CD8-positive, alpha-beta T cell (primary cell): ENCODE measurements at regions of chr5 and their contacts with region 1.

Region 1: DNA sequence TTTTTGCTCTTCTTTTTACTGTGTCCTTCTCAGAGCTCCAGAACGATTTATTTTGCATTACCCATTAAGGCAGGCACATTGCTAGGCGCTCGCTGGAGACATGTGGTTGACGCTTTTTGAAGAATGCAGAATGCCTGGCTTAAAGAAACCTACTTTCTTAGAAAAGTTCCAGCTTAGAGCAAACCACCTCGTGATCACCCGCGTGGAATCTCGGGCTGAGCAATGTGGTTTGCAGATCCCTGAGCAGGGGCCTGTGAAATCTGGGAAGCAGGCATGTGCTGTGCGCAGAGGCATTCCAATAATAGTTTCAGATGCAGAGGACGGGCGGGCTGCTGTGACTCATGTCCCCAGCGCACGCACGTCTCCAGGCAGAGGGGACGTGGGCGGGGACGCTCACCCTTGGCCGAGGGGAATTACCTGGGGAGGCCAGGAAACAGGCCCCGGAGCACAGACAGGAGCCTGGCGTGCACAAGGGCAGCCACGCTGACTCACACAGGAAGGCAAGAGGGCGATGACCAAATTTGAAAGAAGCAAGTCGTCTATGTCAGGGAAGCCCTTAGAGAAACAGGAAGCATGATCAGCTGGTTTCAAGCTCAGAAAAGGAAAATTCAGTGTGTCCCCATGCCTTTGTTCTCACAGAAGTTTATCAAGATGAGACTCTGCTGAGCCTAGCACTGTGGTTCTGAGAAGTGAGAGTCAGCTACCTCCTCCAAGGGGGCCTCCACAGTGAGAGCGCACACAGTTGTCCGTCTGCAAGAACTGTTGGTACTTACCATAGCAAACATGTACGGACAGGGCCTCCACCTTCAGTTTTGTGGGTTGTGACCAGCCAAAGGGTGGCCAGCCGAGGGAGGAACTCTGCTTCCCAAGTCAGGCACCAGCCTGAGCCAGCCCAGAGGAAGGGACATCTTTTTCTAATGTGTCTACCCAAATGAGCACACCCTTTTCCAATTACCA is 218.6 kb downstream of the PIK3R1 start:
- DNase-seq: peak; percentile 54 to 95 (median 87)
- ATAC-seq: peak; percentile 96
- H3K4me3 ChIP-seq: peak overlapping the region; percentile 16
- H3K4me3 Mint-ChIP-seq: peak overlapping the region; percentile 73
- H3K27ac ChIP-seq: peak overlapping the region in 1 of 2 experiments; percentile 79
- H3K27ac Mint-ChIP-seq: peak overlapping the region; percentile 84
- H3K4me1 ChIP-seq: peaks cover 20% of the 10 kb centered on the region
- H3K4me1 Mint-ChIP-seq: peaks cover 36% of the 10 kb centered on the region
- H3K27me3 ChIP-seq: no peaks in the 10 kb centered on the region
- H3K27me3 Mint-ChIP-seq: no peaks in the 10 kb centered on the region
- CTCF ChIP-seq: no peak

Region 2: DNA sequence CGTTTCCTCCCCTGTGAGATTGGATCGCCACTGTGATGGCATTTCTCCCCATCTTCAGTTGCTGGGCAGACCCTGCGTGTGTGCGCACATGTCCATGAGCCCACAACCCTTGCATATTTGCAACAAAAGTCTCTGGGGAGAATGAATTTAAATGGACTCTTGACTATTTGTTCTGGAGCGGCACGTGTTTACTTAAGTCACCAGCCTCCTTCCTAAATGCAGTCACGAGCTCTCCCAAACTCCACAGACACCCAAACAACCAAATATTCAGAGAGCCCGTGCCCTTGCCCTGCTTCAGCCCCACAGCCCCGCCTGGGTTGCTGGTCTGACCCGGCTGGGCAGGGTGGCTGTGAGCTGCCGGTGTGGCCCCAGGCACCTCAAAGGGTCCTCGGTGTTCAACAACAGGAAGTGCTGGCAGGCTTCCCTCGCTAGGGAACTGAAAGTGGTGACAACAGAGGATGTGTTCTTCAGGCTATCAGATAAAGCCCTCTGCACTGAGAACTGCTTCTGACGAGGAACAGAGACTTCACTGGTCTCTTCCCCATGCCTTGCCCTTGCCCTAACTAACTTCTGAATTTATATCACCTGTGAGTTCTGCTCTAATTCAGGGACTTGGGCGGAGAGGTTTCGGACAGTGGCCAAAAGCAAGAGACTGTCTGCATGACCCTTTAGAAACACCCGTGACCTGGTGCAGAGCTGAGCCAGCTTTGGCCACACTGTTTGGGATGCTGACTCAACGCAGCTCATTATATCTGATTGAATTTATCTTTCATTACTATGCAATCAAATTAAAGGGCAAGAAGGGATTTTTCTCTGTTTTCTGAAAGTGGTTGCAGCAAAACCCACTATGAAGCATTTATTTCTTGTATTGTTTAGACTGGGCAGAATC is 1218.4 kb before region 1 on chr5:
- CTCF ChIA-PET with region 1: no interaction called
- POLR2A ChIA-PET with region 1: no interaction called
- intact Hi-C with region 1: loop called in 1 of 2 experiments (anchors 5 kb)
- DNase-seq: peak; percentile 51 to 88 (median 74)
- ATAC-seq: peak; percentile 97
- H3K4me3 ChIP-seq: peak overlapping the region; percentile 19 to 39
- H3K4me3 Mint-ChIP-seq: peak overlapping the region; percentile 72
- H3K27ac ChIP-seq: peak overlapping the region; percentile 60 to 61
- H3K27ac Mint-ChIP-seq: peak overlapping the region; percentile 99
- H3K4me1 ChIP-seq: peaks cover 45% of the 10 kb centered on the region
- H3K4me1 Mint-ChIP-seq: peaks cover 60% of the 10 kb centered on the region
- H3K27me3 ChIP-seq: no peaks in the 10 kb centered on the region
- H3K27me3 Mint-ChIP-seq: no peaks in the 10 kb centered on the region
- CTCF ChIP-seq: no peak

Region 3: DNA sequence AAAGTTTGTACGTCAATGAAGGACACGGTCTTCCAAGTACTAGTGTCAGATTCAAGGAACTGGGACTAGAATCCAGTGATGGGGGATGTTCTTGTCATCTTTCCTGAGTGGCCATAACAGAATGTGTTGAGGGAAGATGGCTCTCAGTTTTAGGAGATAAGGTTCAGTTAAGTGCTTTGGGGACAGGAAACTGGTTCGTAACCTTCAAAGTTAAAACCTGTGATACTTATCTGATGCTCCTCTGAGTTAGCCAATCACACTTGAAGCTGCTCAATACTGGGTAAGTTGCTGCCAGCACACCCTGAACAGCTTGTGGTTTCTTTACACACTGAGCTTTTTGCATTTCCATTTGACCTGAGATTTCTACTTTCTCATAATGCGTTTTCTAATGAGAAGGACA is 154.2 kb before region 1 on chr5:
- CTCF ChIA-PET with region 1: no interaction called
- POLR2A ChIA-PET with region 1: interaction called, 4 read pairs
- intact Hi-C with region 1: loop called in 1 of 2 experiments (anchors 1 kb)
- DNase-seq: peak in 6 of 9 experiments; percentile 30 to 91 (median 56)
- ATAC-seq: peak; percentile 89
- H3K4me3 ChIP-seq: peak overlapping the region; percentile 56
- H3K4me3 Mint-ChIP-seq: peak overlapping the region; percentile 86
- H3K27ac ChIP-seq: peak overlapping the region; percentile 68 to 74
- H3K27ac Mint-ChIP-seq: peak overlapping the region; percentile 95
- H3K4me1 ChIP-seq: peaks cover 59% of the 10 kb centered on the region
- H3K4me1 Mint-ChIP-seq: peaks cover 84% of the 10 kb centered on the region
- H3K27me3 ChIP-seq: no peaks in the 10 kb centered on the region
- H3K27me3 Mint-ChIP-seq: no peaks in the 10 kb centered on the region
- CTCF ChIP-seq: no peak

Region 4: GRCh38 chr5:68378204-68378824 is 55.9 kb before region 1 on chr5:
- CTCF ChIA-PET with region 1: no interaction called
- POLR2A ChIA-PET with region 1: interaction called, 3 read pairs
- intact Hi-C with region 1: loop called in 1 of 2 experiments (anchors 5 kb)
- DNase-seq: peak in 5 of 9 experiments; percentile 9 to 55 (median 23)
- ATAC-seq: peak; percentile 55
- H3K4me3 ChIP-seq: no peak overlapping the region
- H3K4me3 Mint-ChIP-seq: peak overlapping the region; percentile 9
- H3K27ac ChIP-seq: peak overlapping the region in 1 of 2 experiments; percentile 11
- H3K27ac Mint-ChIP-seq: peak overlapping the region; percentile 80
- H3K4me1 ChIP-seq: peaks cover 20% of the 10 kb centered on the region
- H3K4me1 Mint-ChIP-seq: peaks cover 56% of the 10 kb centered on the region
- H3K27me3 ChIP-seq: no peaks in the 10 kb centered on the region
- H3K27me3 Mint-ChIP-seq: no peaks in the 10 kb centered on the region
- CTCF ChIP-seq: no peak

Region 5: DNA sequence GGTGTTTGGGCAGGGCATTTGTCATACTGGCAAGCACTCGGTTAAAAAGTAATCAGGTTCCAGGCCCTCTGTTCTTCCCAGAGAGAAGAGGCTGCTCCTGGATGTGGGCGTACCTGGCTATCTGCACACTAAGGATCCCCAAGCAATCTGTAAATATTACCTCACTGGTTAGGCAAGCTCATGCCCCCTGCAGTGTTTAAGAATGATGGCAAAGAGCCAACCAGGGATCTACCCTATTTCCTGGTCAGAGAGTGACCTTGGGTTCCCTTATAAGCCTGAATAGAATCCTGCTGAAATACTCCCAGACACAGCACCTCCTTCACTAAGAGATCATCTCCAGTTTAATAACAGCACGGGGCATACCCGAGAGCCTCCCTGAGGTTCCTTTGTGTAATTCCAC is 37.5 kb before region 1 on chr5:
- CTCF ChIA-PET with region 1: no interaction called
- POLR2A ChIA-PET with region 1: no interaction called
- intact Hi-C with region 1: no loop called
- DNase-seq: no peak
- ATAC-seq: no peak
- H3K4me3 ChIP-seq: no peak overlapping the region
- H3K4me3 Mint-ChIP-seq: no peak overlapping the region
- H3K27ac ChIP-seq: no peak overlapping the region
- H3K27ac Mint-ChIP-seq: no peak overlapping the region
- H3K4me1 ChIP-seq: no peaks in the 10 kb centered on the region
- H3K4me1 Mint-ChIP-seq: peaks cover 14% of the 10 kb centered on the region
- H3K27me3 ChIP-seq: no peaks in the 10 kb centered on the region
- H3K27me3 Mint-ChIP-seq: no peaks in the 10 kb centered on the region
- CTCF ChIP-seq: no peak

Region 6: DNA sequence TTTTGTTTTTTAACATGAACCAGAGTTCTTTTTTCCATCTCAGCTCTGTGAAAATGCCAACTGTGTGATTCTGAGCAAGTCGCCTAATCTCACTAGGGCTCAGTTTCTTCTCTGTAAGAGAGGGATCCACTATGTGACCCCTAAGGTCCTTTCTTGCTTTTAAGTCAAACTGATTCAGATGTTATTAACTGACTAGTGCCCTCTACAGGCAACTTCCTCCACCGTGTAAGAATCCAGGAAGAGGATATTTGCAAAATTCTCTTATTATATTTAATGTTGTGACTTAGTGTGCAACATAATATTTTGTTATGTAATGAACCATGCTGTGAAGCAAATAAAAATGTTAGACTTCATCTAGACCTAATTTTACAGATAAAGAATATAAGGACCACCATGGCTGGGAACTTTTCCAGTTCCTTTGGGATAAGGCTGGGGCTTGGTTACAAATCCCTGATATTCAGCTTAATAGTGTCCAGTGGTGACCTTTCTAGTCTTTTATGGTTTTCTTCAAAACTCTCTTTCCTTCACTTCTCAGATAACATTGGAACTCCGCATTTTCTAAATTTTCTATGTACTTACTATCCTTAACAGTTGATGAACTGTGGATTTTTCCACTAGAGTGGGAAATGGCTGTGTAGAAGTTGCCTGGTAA is 26.1 kb after region 1 on chr5:
- CTCF ChIA-PET with region 1: interaction called, 5 read pairs
- POLR2A ChIA-PET with region 1: no interaction called
- intact Hi-C with region 1: loop called in 1 of 2 experiments (anchors 1 kb)
- DNase-seq: peak in 8 of 9 experiments; percentile 13 to 81 (median 42)
- ATAC-seq: peak; percentile 55
- H3K4me3 ChIP-seq: no peak overlapping the region
- H3K4me3 Mint-ChIP-seq: no peak overlapping the region
- H3K27ac ChIP-seq: no peak overlapping the region
- H3K27ac Mint-ChIP-seq: peak overlapping the region; percentile 19
- H3K4me1 ChIP-seq: peaks cover 13% of the 10 kb centered on the region
- H3K4me1 Mint-ChIP-seq: peaks cover 18% of the 10 kb centered on the region
- H3K27me3 ChIP-seq: no peaks in the 10 kb centered on the region
- H3K27me3 Mint-ChIP-seq: no peaks in the 10 kb centered on the region
- CTCF ChIP-seq: peak; percentile 80

Region 7: GRCh38 chr5:68478301-68479095 is 44.3 kb after region 1 on chr5:
- CTCF ChIA-PET with region 1: no interaction called
- POLR2A ChIA-PET with region 1: no interaction called
- intact Hi-C with region 1: no loop called
- DNase-seq: no peak
- ATAC-seq: no peak
- H3K4me3 ChIP-seq: no peak overlapping the region
- H3K4me3 Mint-ChIP-seq: no peak overlapping the region
- H3K27ac ChIP-seq: no peak overlapping the region
- H3K27ac Mint-ChIP-seq: no peak overlapping the region
- H3K4me1 ChIP-seq: no peaks in the 10 kb centered on the region
- H3K4me1 Mint-ChIP-seq: no peaks in the 10 kb centered on the region
- H3K27me3 ChIP-seq: no peaks in the 10 kb centered on the region
- H3K27me3 Mint-ChIP-seq: peaks cover 3% of the 10 kb centered on the region
- CTCF ChIP-seq: no peak

Region 8: GRCh38 chr5:68644971-68645370 is 210.8 kb after region 1 on chr5:
- CTCF ChIA-PET with region 1: no interaction called
- POLR2A ChIA-PET with region 1: no interaction called
- intact Hi-C with region 1: no loop called
- DNase-seq: no peak
- ATAC-seq: no peak
- H3K4me3 ChIP-seq: no peak overlapping the region
- H3K4me3 Mint-ChIP-seq: no peak overlapping the region
- H3K27ac ChIP-seq: no peak overlapping the region
- H3K27ac Mint-ChIP-seq: no peak overlapping the region
- H3K4me1 ChIP-seq: no peaks in the 10 kb centered on the region
- H3K4me1 Mint-ChIP-seq: no peaks in the 10 kb centered on the region
- H3K27me3 ChIP-seq: no peaks in the 10 kb centered on the region
- H3K27me3 Mint-ChIP-seq: no peaks in the 10 kb centered on the region
- CTCF ChIP-seq: no peak

Region 9: DNA sequence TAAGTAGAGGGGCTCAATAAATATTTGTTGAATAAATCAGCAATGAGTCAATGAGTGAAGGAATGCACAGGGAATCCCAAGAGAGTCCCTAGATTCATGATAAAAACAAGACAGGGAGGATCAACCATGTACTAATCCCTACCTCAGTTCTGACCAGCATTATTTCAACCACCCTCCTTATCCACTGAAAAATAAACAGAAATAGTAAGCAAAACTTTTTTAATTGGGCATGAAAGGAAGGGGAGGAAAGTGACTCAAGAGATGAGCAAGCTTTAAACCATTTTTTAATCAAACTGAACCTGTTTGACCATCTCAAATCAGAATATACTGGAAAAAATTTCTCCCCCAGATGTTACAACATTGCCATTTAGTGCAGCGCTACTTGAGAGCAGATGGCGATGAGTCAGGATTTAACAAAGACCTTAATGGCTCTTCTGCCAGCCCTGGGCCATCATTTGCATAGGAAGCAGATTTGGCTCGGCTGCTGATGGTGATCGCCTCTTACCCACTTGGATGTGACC is 464.8 kb after region 1 on chr5:
- CTCF ChIA-PET with region 1: no interaction called
- POLR2A ChIA-PET with region 1: no interaction called
- intact Hi-C with region 1: loop called in 1 of 2 experiments (anchors 10 kb)
- DNase-seq: no peak
- ATAC-seq: no peak
- H3K4me3 ChIP-seq: no peak overlapping the region
- H3K4me3 Mint-ChIP-seq: no peak overlapping the region
- H3K27ac ChIP-seq: no peak overlapping the region
- H3K27ac Mint-ChIP-seq: no peak overlapping the region
- H3K4me1 ChIP-seq: peaks cover 9% of the 10 kb centered on the region
- H3K4me1 Mint-ChIP-seq: peaks cover 14% of the 10 kb centered on the region
- H3K27me3 ChIP-seq: no peaks in the 10 kb centered on the region
- H3K27me3 Mint-ChIP-seq: no peaks in the 10 kb centered on the region
- CTCF ChIP-seq: no peak